ENCODE measurements at regions of chr4 and their contacts with region 1.

Region 1: DNA sequence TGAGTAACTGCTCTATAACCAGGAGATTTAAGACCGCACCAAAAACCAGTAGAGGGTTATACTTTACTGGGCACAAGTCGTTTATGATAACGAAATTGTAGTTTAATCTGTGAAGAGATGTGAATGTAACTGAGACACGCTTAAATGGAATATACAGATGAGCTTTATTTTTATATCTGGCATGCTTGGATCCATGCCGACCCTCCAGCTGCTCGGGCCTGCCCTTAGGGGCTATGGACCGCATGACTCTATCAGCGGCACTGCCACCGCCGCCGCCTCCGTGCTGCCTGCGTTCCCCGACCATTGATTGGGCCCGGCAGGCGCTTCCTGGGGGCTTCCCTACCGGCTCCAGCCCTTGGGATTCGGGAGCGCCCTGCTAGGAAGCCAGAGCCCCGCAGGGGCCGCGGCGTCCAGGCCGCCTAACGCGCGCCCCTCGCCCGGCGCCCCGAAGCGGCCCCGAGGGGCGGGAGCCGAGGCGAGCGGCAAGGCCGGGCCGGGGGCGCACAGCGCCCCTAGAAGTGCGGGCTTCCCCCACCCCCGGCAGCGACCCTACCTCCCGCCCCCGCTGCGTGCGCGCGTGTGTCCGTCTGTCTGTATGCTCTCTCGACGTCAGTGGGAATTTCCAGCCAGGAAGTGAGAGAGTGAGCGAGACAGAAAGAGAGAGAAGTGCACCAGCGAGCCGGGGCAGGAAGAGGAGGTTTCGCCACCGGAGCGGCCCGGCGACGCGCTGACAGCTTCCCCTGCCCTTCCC is at the start of gene NFKB1:
- DNase-seq: peak; percentile 88
- ATAC-seq: peak; percentile 72
- H3K4me3 Mint-ChIP-seq: peak within 1 kb of the TSS; percentile 97
- H3K27ac Mint-ChIP-seq: peak within 1 kb of the TSS; percentile 96
- H3K4me1 Mint-ChIP-seq: peaks cover 26% of the 10 kb centered on the region
- H3K27me3 Mint-ChIP-seq: no peaks in the 10 kb centered on the region
- total RNA-seq, gene NFKB1: 167 to 174 TPM

Region 2: GRCh38 chr4:102335616-102336015 is 165.3 kb before region 1 on chr4:
- CTCF ChIA-PET with region 1: no interaction called
- POLR2A ChIA-PET with region 1: no interaction called
- intact Hi-C with region 1: no loop called
- DNase-seq: no peak
- ATAC-seq: peak; percentile 65
- H3K4me3 Mint-ChIP-seq: no peak overlapping the region
- H3K27ac Mint-ChIP-seq: no peak overlapping the region
- H3K4me1 Mint-ChIP-seq: peaks cover 64% of the 10 kb centered on the region
- H3K27me3 Mint-ChIP-seq: no peaks in the 10 kb centered on the region

Region 3: GRCh38 chr4:102449751-102450352 is 51.0 kb before region 1 on chr4:
- CTCF ChIA-PET with region 1: interaction called, 3 read pairs
- POLR2A ChIA-PET with region 1: interaction called, 3 read pairs
- intact Hi-C with region 1: loop called (anchors 2 to 5 kb)
- DNase-seq: peak; percentile 69
- ATAC-seq: peak; percentile 86
- H3K4me3 Mint-ChIP-seq: no peak overlapping the region
- H3K27ac Mint-ChIP-seq: no peak overlapping the region
- H3K4me1 Mint-ChIP-seq: peaks cover 54% of the 10 kb centered on the region
- H3K27me3 Mint-ChIP-seq: no peaks in the 10 kb centered on the region

Region 4: GRCh38 chr4:102518703-102519131 is 17.8 kb after region 1 on chr4:
- CTCF ChIA-PET with region 1: interaction called, 4 read pairs
- POLR2A ChIA-PET with region 1: interaction called, 4 read pairs
- intact Hi-C with region 1: loop called (anchors 1 to 2 kb)
- DNase-seq: no peak
- ATAC-seq: peak; percentile 60
- H3K4me3 Mint-ChIP-seq: peak overlapping the region; percentile 15
- H3K27ac Mint-ChIP-seq: peak overlapping the region; percentile 84
- H3K4me1 Mint-ChIP-seq: peaks cover 85% of the 10 kb centered on the region
- H3K27me3 Mint-ChIP-seq: no peaks in the 10 kb centered on the region

Region 5: DNA sequence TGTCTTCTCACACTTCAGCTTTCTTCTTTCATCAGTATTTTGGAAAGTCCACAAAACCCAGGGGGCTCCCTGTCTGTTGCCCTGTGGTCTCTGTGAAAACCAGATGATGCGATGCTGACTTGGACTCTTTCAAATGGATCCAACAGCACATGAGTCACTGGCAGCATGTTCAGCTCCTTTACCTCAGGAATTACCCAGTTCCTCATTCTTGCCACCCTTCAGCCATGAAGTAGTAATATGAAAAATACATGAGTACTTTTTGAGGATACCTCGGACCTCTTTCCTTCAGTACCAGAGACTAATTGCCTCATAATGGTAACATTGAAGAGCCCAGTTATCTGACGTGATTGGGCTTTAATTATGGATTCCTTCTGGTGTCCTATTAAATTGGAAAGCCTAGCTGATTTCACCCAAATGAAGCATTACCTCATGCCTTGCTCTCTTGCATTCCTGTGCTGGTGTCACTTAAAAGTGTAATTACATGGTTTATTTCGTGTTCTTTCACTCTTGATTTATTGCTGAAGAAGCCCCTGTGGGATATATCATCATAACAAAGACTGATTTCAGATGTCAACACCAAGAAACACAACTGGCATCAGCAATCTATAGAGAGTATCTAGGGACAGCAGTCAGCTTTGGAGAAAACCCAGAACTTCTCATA is 63.7 kb after region 1 on chr4:
- CTCF ChIA-PET with region 1: interaction called, 4 read pairs
- POLR2A ChIA-PET with region 1: interaction called, 5 read pairs
- intact Hi-C with region 1: loop called (anchors 2 kb)
- DNase-seq: peak; percentile 59
- ATAC-seq: peak; percentile 51
- H3K4me3 Mint-ChIP-seq: no peak overlapping the region
- H3K27ac Mint-ChIP-seq: peak overlapping the region; percentile 85
- H3K4me1 Mint-ChIP-seq: peaks cover 84% of the 10 kb centered on the region
- H3K27me3 Mint-ChIP-seq: no peaks in the 10 kb centered on the region

Region 6: DNA sequence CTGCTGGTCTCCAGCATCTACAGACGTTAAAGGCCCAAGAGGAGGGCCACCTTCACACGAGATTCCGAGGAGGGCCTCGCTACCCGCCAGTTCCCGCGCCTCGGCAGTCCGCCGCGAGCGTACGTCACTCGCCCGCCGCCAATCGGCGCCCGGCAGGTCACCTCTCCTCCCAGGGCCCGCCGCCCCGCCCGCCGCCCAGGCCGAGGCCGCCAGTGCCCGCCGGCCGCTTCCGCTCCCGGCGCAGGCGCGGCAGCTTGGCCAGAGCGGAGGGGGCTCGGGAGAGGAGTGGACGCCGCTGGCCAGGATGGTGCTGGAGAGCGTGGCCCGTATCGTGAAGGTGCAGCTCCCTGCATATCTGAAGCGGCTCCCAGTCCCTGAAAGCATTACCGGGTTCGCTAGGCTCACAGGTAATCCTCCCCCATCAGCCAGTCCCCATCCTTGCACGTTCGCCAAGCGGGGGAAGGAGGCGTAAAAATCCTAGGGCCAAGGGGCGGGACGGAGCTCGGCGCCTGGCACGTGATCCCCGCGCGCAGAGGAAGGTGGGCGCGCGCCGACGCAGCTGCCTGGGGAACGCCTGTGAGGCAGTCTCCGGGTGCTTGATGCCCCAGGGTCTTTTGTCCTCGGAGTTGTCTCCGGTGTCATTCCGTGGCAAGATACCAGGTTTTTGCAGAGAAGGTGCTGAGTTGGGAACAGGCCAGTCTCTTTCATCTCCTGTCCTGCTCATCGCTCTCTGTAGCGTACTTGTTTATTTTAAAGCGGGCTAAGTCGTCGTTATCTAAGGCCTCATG is 368.1 kb after region 1 on chr4 and contains the start of gene CISD2:
- CTCF ChIA-PET with region 1: no interaction called
- POLR2A ChIA-PET with region 1: no interaction called
- intact Hi-C with region 1: loop called in 1 of 2 experiments (anchors 1 kb)
- DNase-seq: peak; percentile 96
- ATAC-seq: peak; percentile 88
- H3K4me3 Mint-ChIP-seq: peak within 1 kb of the TSS; percentile 95
- H3K27ac Mint-ChIP-seq: peak within 1 kb of the TSS; percentile 99
- H3K4me1 Mint-ChIP-seq: peaks cover 53% of the 10 kb centered on the region
- H3K27me3 Mint-ChIP-seq: no peaks in the 10 kb centered on the region
- total RNA-seq, gene CISD2: 33.5 to 35.1 TPM

Region 7: GRCh38 chr4:103289186-103289585 is 788.3 kb after region 1 on chr4:
- CTCF ChIA-PET with region 1: no interaction called
- POLR2A ChIA-PET with region 1: no interaction called
- intact Hi-C with region 1: no loop called
- DNase-seq: no peak
- ATAC-seq: no peak
- H3K4me3 Mint-ChIP-seq: no peak overlapping the region
- H3K27ac Mint-ChIP-seq: no peak overlapping the region
- H3K4me1 Mint-ChIP-seq: no peaks in the 10 kb centered on the region
- H3K27me3 Mint-ChIP-seq: no peaks in the 10 kb centered on the region